Activated CD4-positive, alpha-beta memory T cell treated with anti-CD3 and anti-CD28 coated beads for 36 hours (primary cell): ENCODE measurements at regions of chr17 and their contacts with region 1.

Region 1: GRCh38 chr17:64975329-64976087 is 56.2 kb upstream of the LRRC37A3 start:
- DNase-seq: peak; percentile 97
- H3K4me3 Mint-ChIP-seq: peak overlapping the region; percentile 82
- H3K27ac Mint-ChIP-seq: peak overlapping the region; percentile 100
- H3K4me1 Mint-ChIP-seq: peaks cover 55% of the 10 kb centered on the region
- H3K27me3 Mint-ChIP-seq: no peaks in the 10 kb centered on the region

Region 2: GRCh38 chr17:65173284-65173793 is 197.8 kb after region 1 on chr17:
- CTCF ChIA-PET with region 1: no interaction called
- POLR2A ChIA-PET with region 1: no interaction called
- intact Hi-C with region 1: loop called (anchors 2 kb)
- DNase-seq: peak; percentile 91
- H3K4me3 Mint-ChIP-seq: no peak overlapping the region
- H3K27ac Mint-ChIP-seq: no peak overlapping the region
- H3K4me1 Mint-ChIP-seq: peaks cover 34% of the 10 kb centered on the region
- H3K27me3 Mint-ChIP-seq: no peaks in the 10 kb centered on the region